PC-3 (cell line): ENCODE measurements at regions of chrX and their contacts with region 1.

Region 1: GRCh38 chrX:45515262-45516215 is 314.9 kb upstream of the DIPK2B start:
- DNase-seq: peak; percentile 97
- ATAC-seq: peak; percentile 84
- H3K4me3 ChIP-seq: no peak overlapping the region
- H3K27ac ChIP-seq: peak overlapping the region; percentile 99
- H3K4me1 ChIP-seq: peaks cover 48% of the 10 kb centered on the region
- H3K27me3 ChIP-seq: no peaks in the 10 kb centered on the region
- CTCF ChIP-seq: peak; percentile 87

Region 2: DNA sequence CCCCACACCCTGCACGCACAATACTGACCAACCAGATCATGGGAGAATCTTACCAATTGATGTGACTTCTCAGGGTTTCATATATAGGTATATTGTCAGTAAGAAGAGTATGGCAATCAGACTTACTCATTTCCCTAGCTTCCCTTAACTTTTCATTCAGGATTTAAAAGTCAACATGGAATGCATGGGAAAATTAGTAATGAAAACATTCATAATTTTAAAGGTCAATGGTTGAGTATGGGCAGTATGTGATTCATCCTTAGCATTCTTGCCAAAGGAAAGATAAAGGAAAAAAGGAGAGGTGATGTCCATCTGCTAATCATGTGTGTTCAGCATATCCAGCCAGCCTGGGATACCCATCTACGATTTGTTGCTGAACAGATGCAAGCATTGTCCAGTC is 318.8 kb before region 1 on chrX:
- CTCF ChIA-PET with region 1: no interaction called
- POLR2A ChIA-PET with region 1: no interaction called
- intact Hi-C with region 1: no loop called
- DNase-seq: peak; percentile 66
- ATAC-seq: peak; percentile 60
- H3K4me3 ChIP-seq: no peak overlapping the region
- H3K27ac ChIP-seq: peak overlapping the region; percentile 97
- H3K4me1 ChIP-seq: peaks cover 25% of the 10 kb centered on the region
- H3K27me3 ChIP-seq: no peaks in the 10 kb centered on the region
- CTCF ChIP-seq: no peak

Region 3: DNA sequence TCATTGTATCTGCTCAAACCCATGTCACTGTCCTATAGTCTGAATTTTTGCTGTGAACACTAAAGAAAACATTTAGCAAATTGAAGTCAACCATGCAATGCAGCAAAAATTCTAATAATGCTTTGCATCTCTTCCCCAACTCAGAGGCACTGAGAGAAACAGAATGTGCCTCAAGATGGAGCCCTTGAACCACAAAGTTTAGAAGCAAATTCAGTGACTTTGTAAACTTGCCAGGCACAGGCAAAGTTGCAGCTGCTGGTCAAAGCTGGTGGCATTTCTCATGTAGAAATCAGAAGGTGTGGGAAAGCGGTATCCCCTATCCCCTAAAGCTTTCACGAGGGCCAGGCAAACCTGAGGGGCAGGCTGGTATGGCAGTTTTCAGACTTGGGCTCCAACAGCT is 193.2 kb before region 1 on chrX:
- CTCF ChIA-PET with region 1: interaction called, 4 read pairs
- POLR2A ChIA-PET with region 1: no interaction called
- intact Hi-C with region 1: loop called (anchors 2 kb)
- DNase-seq: peak; percentile 92
- ATAC-seq: peak; percentile 78
- H3K4me3 ChIP-seq: no peak overlapping the region
- H3K27ac ChIP-seq: peak overlapping the region; percentile 99
- H3K4me1 ChIP-seq: peaks cover 28% of the 10 kb centered on the region
- H3K27me3 ChIP-seq: no peaks in the 10 kb centered on the region
- CTCF ChIP-seq: peak; percentile 77

Region 4: GRCh38 chrX:45697591-45697990 is 182.1 kb after region 1 on chrX:
- CTCF ChIA-PET with region 1: no interaction called
- POLR2A ChIA-PET with region 1: no interaction called
- intact Hi-C with region 1: loop called (anchors 5 kb)
- DNase-seq: peak; percentile 81
- ATAC-seq: peak; percentile 92
- H3K4me3 ChIP-seq: no peak overlapping the region
- H3K27ac ChIP-seq: peak overlapping the region; percentile 63
- H3K4me1 ChIP-seq: peaks cover 13% of the 10 kb centered on the region
- H3K27me3 ChIP-seq: no peaks in the 10 kb centered on the region
- CTCF ChIP-seq: no peak

Region 5: GRCh38 chrX:45758319-45758718 is 242.8 kb after region 1 on chrX:
- CTCF ChIA-PET with region 1: interaction called, 3 read pairs
- POLR2A ChIA-PET with region 1: interaction called, 12 read pairs
- intact Hi-C with region 1: no loop called
- DNase-seq: peak; percentile 83
- ATAC-seq: peak; percentile 25
- H3K4me3 ChIP-seq: peak overlapping the region; percentile 20; the same call in 1 of the 2 replicates
- H3K27ac ChIP-seq: peak overlapping the region; percentile 92
- H3K4me1 ChIP-seq: peaks cover 92% of the 10 kb centered on the region
- H3K27me3 ChIP-seq: no peaks in the 10 kb centered on the region
- CTCF ChIP-seq: no peak

Region 6: GRCh38 chrX:45843518-45843917 is 328.0 kb after region 1 on chrX:
- CTCF ChIA-PET with region 1: no interaction called
- POLR2A ChIA-PET with region 1: no interaction called
- intact Hi-C with region 1: loop called (anchors 5 kb)
- DNase-seq: peak; percentile 45
- ATAC-seq: peak; percentile 46
- H3K4me3 ChIP-seq: no peak overlapping the region
- H3K27ac ChIP-seq: peak overlapping the region; percentile 81; the same call in 1 of the 2 replicates
- H3K4me1 ChIP-seq: peaks cover 76% of the 10 kb centered on the region
- H3K27me3 ChIP-seq: no peaks in the 10 kb centered on the region
- CTCF ChIP-seq: peak; percentile 51; the same call in 1 of the 2 replicates